Activated B cell treated with CpG ODN at 0.5 μM for 24 hours (primary cell): ENCODE measurements at regions of chr3 and their contacts with region 1.

Region 1: GRCh38 chr3:138923531-138923994 is 23.4 kb downstream of the FOXL2 start:
- DNase-seq: peak; percentile 71
- ATAC-seq: peak; percentile 92
- H3K4me3 Mint-ChIP-seq: no peak overlapping the region
- H3K27ac Mint-ChIP-seq: no peak overlapping the region
- H3K4me1 Mint-ChIP-seq: no peaks in the 10 kb centered on the region
- H3K27me3 Mint-ChIP-seq: peaks cover 28% of the 10 kb centered on the region
- CTCF ChIP-seq: peak; percentile 86

Region 2: GRCh38 chr3:138180375-138181029 is 743.1 kb before region 1 on chr3:
- CTCF ChIA-PET with region 1: interaction called, 3 read pairs
- POLR2A ChIA-PET with region 1: no interaction called
- intact Hi-C with region 1: loop called (anchors 2 kb)
- DNase-seq: no peak
- ATAC-seq: peak; percentile 64
- H3K4me3 Mint-ChIP-seq: no peak overlapping the region
- H3K27ac Mint-ChIP-seq: no peak overlapping the region
- H3K4me1 Mint-ChIP-seq: no peaks in the 10 kb centered on the region
- H3K27me3 Mint-ChIP-seq: peaks cover 3% of the 10 kb centered on the region
- CTCF ChIP-seq: no peak

Region 3: DNA sequence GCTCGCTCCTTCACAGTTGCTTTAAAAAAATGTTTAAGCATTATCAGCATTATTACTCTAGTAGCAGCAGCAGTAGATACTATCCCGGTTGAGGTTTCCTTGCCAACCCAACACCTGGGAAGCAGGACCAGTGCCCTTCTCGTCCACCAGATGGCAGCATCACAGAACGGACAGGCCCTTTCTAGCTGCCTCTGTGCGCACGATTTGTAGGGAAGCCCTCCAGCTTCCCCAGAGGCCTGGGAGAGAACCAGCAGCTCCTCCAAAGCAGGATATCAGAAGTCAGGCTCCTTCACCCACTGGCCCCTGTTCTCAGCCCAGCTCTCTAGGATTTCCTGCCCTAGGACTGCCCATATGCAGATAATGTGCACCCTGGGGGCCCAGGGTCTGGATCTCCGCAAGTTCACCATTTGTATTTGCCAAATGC is 506.0 kb before region 1 on chr3:
- CTCF ChIA-PET with region 1: interaction called, 63 read pairs
- POLR2A ChIA-PET with region 1: no interaction called
- intact Hi-C with region 1: loop called (anchors 1 kb)
- DNase-seq: no peak
- ATAC-seq: peak; percentile 49
- H3K4me3 Mint-ChIP-seq: no peak overlapping the region
- H3K27ac Mint-ChIP-seq: no peak overlapping the region
- H3K4me1 Mint-ChIP-seq: no peaks in the 10 kb centered on the region
- H3K27me3 Mint-ChIP-seq: peaks cover 24% of the 10 kb centered on the region
- CTCF ChIP-seq: peak; percentile 79

Region 4: GRCh38 chr3:138608322-138609135 is 315.0 kb before region 1 on chr3 and contains the start of gene FAIM:
- CTCF ChIA-PET with region 1: no interaction called
- POLR2A ChIA-PET with region 1: no interaction called
- intact Hi-C with region 1: loop called (anchors 1 kb)
- DNase-seq: peak; percentile 71
- ATAC-seq: peak; percentile 75
- H3K4me3 Mint-ChIP-seq: peak within 1 kb of the TSS; percentile 87
- H3K27ac Mint-ChIP-seq: peak within 1 kb of the TSS; percentile 83
- H3K4me1 Mint-ChIP-seq: peaks cover 23% of the 10 kb centered on the region
- H3K27me3 Mint-ChIP-seq: no peaks in the 10 kb centered on the region
- CTCF ChIP-seq: no peak
- total RNA-seq, gene FAIM: 10.5 and 11.5 TPM in 2 replicates

Region 5: DNA sequence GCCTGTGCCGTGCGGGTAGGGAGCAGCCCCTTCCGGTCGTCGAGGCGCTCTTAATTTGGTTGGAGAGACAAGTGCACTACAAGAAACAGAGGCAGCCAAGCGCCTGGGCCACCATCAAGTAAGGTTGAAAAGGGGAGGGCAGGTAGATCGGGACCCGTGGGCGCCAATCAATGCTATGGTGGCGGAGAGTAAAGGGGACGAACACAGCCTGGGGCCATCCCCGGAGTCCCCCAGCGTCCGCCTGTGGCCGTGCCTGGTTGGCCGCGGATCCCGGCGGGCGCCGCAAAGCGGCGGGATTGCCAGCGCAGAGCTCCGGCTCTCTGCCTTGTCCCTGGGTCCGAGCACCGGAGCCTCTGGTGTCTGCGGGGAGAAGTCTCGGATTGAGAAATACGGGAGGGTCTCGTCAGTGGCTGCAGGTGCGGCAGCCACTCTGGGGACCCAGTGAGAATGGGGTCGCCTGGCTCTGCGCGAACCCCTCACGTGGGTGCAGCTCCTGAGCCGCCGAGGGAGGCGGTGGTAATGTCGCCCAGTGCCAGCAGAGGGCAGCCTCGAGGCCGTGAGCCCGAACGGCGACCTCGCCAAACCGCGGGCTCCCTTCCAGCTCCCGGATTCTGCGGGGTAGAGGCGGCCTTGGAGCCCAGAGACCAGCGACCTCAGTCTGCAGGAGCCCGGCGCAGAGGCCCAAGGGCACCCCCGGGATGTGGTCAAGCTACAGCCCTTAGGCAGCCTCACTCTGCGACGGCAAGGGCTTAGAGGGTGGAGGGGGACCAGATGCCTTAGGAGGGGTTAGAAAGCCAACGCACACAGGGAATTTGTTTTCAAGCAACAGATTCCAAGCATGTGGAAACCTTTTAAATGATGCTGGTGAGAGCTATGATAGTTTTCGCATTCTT is 12.5 kb after region 1 on chr3:
- CTCF ChIA-PET with region 1: interaction called, 22 read pairs
- POLR2A ChIA-PET with region 1: no interaction called
- intact Hi-C with region 1: no loop called
- DNase-seq: peak; percentile 70
- ATAC-seq: peak; percentile 89
- H3K4me3 Mint-ChIP-seq: peak overlapping the region; percentile 76
- H3K27ac Mint-ChIP-seq: no peak overlapping the region
- H3K4me1 Mint-ChIP-seq: peaks cover 35% of the 10 kb centered on the region
- H3K27me3 Mint-ChIP-seq: peaks cover 65% of the 10 kb centered on the region
- CTCF ChIP-seq: peak; percentile 67